ENCODE measurements at regions of chr12 and their contacts with region 1.

Region 1: GRCh38 chr12:15227004-15227679 is 5.9 kb upstream of the RERG start:
- DNase-seq: peak; percentile 45
- H3K4me3 Mint-ChIP-seq: no peak overlapping the region
- H3K27ac Mint-ChIP-seq: no peak overlapping the region
- H3K4me1 Mint-ChIP-seq: no peaks in the 10 kb centered on the region
- H3K27me3 Mint-ChIP-seq: peaks cover 33% of the 10 kb centered on the region
- CTCF ChIP-seq: peak; percentile 67

Region 2: DNA sequence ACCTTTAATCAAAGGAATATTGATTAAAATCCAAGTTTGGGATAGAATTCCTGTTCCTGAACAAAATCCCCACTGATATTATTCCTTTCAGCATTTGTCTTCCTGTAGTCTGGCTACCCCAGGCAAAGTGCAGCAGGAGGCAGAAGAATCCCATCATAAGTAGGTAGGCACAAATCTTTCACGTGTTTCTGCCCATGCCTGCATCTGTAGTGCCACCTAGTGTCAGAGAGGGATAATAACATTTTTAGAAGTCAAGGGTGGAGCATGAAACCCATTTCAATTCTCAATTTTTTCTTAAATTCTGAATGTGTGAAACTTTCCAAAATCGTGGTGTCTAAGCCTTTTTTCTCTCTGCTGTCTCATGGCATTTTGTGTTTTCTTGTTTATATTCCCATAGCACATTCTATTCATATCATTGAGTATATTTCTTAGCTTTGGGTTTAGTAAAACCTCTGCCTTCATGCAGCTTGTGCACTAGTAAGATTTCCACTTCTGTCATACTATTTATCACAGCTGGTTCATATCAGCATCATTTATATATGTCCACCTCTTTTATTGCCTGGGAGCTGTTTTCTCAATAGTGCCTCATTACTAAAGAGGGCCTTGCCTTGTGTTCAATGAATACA is 41.9 kb after region 1 on chr12:
- CTCF ChIA-PET with region 1: interaction called, 5 read pairs
- intact Hi-C with region 1: loop called (anchors 1 kb)
- DNase-seq: peak; percentile 52
- H3K4me3 Mint-ChIP-seq: no peak overlapping the region
- H3K27ac Mint-ChIP-seq: no peak overlapping the region
- H3K4me1 Mint-ChIP-seq: peaks cover 6% of the 10 kb centered on the region
- H3K27me3 Mint-ChIP-seq: no peaks in the 10 kb centered on the region
- CTCF ChIP-seq: peak; percentile 65

Region 3: GRCh38 chr12:15334225-15334624 is 107.1 kb after region 1 on chr12:
- CTCF ChIA-PET with region 1: no interaction called
- intact Hi-C with region 1: no loop called
- DNase-seq: no peak
- H3K4me3 Mint-ChIP-seq: no peak overlapping the region
- H3K27ac Mint-ChIP-seq: no peak overlapping the region
- H3K4me1 Mint-ChIP-seq: peaks cover 14% of the 10 kb centered on the region
- H3K27me3 Mint-ChIP-seq: peaks cover 12% of the 10 kb centered on the region
- CTCF ChIP-seq: no peak

Region 4: DNA sequence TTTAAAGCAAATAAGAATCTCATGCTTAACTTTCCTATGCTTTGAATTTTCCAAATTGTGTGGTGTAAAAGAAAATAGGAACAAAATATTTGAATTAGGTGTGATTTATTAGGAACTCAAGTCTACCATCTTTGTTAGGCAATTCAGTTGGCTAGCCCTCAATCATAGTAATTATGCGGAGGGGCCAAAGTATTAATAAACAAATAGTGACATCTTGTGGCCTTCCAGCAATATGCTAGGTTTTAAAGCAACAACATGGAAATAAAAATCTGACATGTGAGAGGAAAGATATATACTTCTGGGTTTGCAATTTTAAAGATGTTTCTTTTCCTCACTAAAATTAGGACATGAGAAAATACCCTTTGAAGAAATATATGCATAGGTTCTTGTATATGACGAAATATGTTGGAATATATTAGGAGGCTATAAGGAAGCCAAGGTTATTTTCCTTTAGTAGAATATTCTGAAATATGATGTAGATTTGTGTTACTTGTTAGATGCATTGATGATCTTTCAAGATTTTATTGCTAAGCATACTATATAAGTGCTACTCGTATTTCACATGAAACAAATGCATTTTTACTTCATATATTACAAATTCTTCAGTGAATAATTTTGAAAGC is 295.5 kb after region 1 on chr12:
- CTCF ChIA-PET with region 1: interaction called, 10 read pairs
- intact Hi-C with region 1: loop called (anchors 1 kb)
- DNase-seq: peak; percentile 21
- H3K4me3 Mint-ChIP-seq: no peak overlapping the region
- H3K27ac Mint-ChIP-seq: no peak overlapping the region
- H3K4me1 Mint-ChIP-seq: peaks cover 19% of the 10 kb centered on the region
- H3K27me3 Mint-ChIP-seq: peaks cover 20% of the 10 kb centered on the region
- CTCF ChIP-seq: peak; percentile 40

Measured in Calu3 (cell line).